Activated CD4-positive, alpha-beta T cell treated with anti-CD3 and anti-CD28 coated beads for 36 hours (primary cell): ENCODE measurements at regions of chr7 and their contacts with region 1.

Region 1: DNA sequence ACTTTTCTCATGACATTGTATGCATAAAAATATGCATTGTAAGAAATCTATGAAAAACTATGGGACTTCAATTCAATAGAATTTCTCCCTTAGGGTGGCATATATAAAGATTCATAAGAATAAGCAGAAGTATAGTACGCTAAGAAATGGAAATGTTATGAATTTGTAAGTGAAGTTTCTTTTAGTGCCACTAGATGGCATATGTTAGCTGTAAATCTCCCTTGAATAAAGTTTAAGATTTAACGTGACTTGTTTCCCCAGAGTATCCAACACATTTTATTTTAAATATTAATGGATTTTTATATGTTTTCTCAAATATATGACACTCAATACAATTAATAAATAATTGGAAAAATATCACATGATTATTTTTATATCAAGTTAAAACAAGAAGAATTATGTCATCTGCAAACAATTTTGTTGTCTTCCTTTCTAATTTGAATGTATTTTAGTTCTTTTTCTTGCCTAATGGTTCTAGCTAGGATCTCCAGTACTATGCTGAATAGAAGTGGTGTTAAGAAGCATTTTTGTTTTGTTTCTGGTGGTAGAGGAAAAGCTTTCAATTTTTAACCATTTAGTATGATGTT is 287.2 kb downstream of the HGF start:
- DNase-seq: no peak
- ATAC-seq: no peak
- H3K4me3 Mint-ChIP-seq: no peak overlapping the region
- H3K27ac Mint-ChIP-seq: no peak overlapping the region
- H3K4me1 Mint-ChIP-seq: no peaks in the 10 kb centered on the region
- H3K27me3 Mint-ChIP-seq: no peaks in the 10 kb centered on the region

Region 2: GRCh38 chr7:81339946-81340345 is 142.7 kb before region 1 on chr7:
- CTCF ChIA-PET with region 1: no interaction called
- POLR2A ChIA-PET with region 1: no interaction called
- intact Hi-C with region 1: no loop called
- DNase-seq: no peak
- ATAC-seq: no peak
- H3K4me3 Mint-ChIP-seq: no peak overlapping the region
- H3K27ac Mint-ChIP-seq: no peak overlapping the region
- H3K4me1 Mint-ChIP-seq: no peaks in the 10 kb centered on the region
- H3K27me3 Mint-ChIP-seq: no peaks in the 10 kb centered on the region

Region 3: DNA sequence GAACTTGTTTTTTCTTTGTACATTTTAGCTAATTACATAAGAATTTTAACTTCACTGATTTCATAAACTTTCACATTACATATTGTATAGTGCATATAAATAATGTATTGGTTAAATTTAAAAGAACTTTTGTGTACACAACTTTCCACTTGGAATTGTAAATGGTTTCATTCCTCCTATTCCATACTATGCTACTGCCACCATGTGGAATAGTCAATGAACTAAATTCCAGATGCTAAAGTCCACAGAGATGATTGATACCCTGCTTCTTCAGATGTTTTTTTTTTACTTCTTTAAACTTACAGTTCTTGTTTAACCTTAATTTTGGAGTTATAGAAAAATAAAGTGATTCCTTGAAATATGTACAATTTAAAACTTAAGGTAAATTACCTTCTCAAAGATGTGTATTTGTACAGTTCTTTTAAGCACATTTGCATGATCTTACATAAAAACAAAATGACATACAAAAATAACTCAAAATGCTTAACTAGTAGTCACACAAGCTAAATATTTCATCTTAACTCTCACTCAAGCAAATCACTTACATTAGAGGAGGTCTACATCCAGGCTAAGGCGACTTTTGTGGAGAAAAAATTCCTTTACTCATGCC is 534.7 kb after region 1 on chr7:
- CTCF ChIA-PET with region 1: interaction called, 3 read pairs
- POLR2A ChIA-PET with region 1: no interaction called
- intact Hi-C with region 1: loop called in 1 of 2 experiments (anchors 5 kb)
- DNase-seq: no peak
- ATAC-seq: no peak
- H3K4me3 Mint-ChIP-seq: no peak overlapping the region
- H3K27ac Mint-ChIP-seq: no peak overlapping the region
- H3K4me1 Mint-ChIP-seq: no peaks in the 10 kb centered on the region
- H3K27me3 Mint-ChIP-seq: no peaks in the 10 kb centered on the region

Region 4: DNA sequence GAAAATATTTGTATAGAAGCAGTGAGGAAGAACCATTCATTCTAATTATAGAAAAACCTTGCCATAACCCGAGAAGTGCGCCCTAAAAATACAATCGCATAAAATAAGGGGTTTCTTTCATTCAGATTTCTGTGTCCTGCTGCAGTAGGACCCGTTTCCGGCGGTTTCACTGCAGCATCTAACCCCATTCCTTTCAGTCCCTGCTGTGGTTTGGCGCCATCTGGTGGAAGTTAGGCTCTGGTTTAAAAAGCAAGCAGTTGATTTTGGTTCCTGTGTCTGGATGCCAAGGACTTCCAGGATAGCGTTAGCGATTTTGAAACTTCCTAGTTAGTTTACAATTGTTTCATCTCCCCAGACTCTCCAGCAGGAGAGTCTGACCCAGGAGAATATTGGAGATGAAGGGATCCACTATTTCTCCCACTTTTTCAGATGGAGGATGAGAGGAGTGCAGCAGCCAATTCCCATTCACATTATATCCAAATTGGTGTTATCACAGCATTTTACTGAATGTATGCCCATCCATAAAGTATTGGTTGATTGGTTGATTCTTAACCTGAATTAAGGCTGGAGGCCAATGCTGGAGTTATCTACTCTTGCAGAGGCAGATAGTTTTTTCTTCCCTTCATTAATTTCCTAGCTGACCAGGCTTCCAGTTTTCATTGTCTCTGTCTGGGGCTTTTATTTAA is 1089.6 kb after region 1 on chr7:
- CTCF ChIA-PET with region 1: interaction called, 5 read pairs
- POLR2A ChIA-PET with region 1: no interaction called
- intact Hi-C with region 1: loop called (anchors 1 to 5 kb)
- DNase-seq: peak; percentile 83
- ATAC-seq: peak; percentile 61
- H3K4me3 Mint-ChIP-seq: no peak overlapping the region
- H3K27ac Mint-ChIP-seq: no peak overlapping the region
- H3K4me1 Mint-ChIP-seq: no peaks in the 10 kb centered on the region
- H3K27me3 Mint-ChIP-seq: no peaks in the 10 kb centered on the region